ENCODE measurements at regions of chr7 and their contacts with region 1.

Region 1: GRCh38 chr7:105198223-105198622 is 184.2 kb downstream of the KMT2E start:
- DNase-seq: no peak
- ATAC-seq: peak in 7 of 8 donors; percentile 47 to 77 (median 56)
- H3K4me3 ChIP-seq: no peak overlapping the region
- H3K27ac ChIP-seq: no peak overlapping the region
- H3K4me1 ChIP-seq: peaks cover 0 to 38% (median 18%) of the 10 kb centered on the region in 9 donors
- H3K27me3 ChIP-seq: no peaks in the 10 kb centered on the region
- CTCF ChIP-seq: no peak

Region 2: DNA sequence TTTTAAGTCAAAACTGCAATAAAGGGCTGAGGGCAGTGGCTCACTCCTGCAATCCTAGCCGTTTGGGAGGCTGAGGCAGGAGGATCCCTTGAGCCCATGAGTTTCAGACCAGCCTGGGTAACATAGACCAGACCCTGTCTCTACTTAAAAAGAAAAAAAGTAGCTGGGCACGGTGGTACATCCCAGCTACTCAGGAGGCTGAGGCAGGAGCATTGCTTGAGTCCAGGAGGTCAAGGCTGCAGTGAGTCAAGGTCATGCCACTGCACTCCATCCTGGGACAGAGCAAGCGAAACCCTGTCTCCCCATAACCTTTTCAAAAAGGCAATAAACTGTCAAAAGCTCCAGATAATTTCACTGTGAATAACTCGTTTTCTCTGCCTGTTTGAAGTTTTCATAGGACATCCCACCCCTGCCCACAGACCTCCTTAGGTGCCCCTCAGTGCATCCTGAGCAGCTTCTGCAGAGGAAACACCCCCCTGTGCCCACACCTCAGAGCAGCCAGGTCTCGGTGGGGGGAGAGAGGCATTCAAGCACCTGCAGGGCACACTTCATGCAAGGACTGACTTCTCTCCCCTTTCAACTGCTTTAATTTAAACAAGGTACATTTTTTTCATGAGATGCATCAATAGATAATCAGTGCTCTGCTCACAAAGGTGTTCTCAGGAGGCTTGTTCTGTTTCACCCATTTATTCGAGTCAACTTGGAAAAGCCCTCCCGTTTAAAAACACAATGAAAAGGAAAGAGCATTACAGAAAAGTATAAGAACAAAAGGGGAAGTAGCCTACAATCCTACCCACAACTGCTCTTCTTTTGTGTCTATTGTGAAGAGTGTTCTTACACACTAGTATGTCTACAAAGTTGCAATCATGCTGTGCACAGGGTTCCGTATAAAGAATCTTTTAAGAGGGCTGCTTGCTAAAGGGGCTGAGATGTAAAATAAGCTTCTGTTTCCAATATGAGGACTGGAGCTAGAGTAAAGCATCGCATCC is 79.3 kb before region 1 on chr7:
- intact Hi-C with region 1: no loop called
- DNase-seq: no peak
- ATAC-seq: peak in 1 of 8 donors; percentile 57
- H3K4me3 ChIP-seq: no peak overlapping the region
- H3K27ac ChIP-seq: no peak overlapping the region
- H3K4me1 ChIP-seq: peaks cover 0 to under 1% (median 0%) of the 10 kb centered on the region in 9 donors
- H3K27me3 ChIP-seq: no peaks in the 10 kb centered on the region
- CTCF ChIP-seq: no peak

Region 3: GRCh38 chr7:105141068-105141467 is 57.2 kb before region 1 on chr7:
- intact Hi-C with region 1: no loop called
- DNase-seq: no peak
- ATAC-seq: peak in 2 of 8 donors; percentile 34 to 46
- H3K4me3 ChIP-seq: no peak overlapping the region
- H3K27ac ChIP-seq: no peak overlapping the region
- H3K4me1 ChIP-seq: peaks cover 0 to 14% (median 6%) of the 10 kb centered on the region in 9 donors
- H3K27me3 ChIP-seq: no peaks in the 10 kb centered on the region
- CTCF ChIP-seq: peak in 6 of 9 donors; percentile 15 to 45 (median 26)

Region 4: GRCh38 chr7:105238198-105238765 is 40.1 kb after region 1 on chr7:
- intact Hi-C with region 1: loop called in 1 of 10 experiments (anchors 5 kb)
- DNase-seq: no peak
- ATAC-seq: no peak
- H3K4me3 ChIP-seq: no peak overlapping the region
- H3K27ac ChIP-seq: no peak overlapping the region
- H3K4me1 ChIP-seq: peaks cover 2 to 48% (median 25%) of the 10 kb centered on the region in 9 donors
- H3K27me3 ChIP-seq: no peaks in the 10 kb centered on the region
- CTCF ChIP-seq: no peak

Region 5: DNA sequence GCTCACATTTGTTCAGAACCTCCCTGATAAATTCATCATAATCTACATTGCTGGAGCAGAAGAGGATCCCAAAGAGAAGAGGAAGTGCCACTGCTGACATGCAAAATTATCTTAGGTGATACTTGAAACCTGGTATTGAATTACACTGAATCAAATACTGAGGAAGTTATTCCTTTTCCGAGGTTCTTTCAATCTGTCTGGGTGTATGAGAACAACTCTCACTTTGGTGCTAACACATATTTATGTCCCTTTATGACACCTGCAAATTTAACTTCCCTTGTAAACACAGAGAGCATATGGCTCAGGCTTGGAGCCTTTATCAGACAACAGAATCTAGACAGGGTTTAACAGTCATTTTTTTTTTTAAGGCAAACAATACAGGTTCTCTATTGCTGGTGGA is 59.1 kb after region 1 on chr7:
- intact Hi-C with region 1: no loop called
- DNase-seq: no peak
- ATAC-seq: peak in 1 of 8 donors; percentile 16
- H3K4me3 ChIP-seq: no peak overlapping the region
- H3K27ac ChIP-seq: no peak overlapping the region
- H3K4me1 ChIP-seq: peaks cover 0 to 35% (median 21%) of the 10 kb centered on the region in 9 donors
- H3K27me3 ChIP-seq: no peaks in the 10 kb centered on the region
- CTCF ChIP-seq: no peak

Region 6: DNA sequence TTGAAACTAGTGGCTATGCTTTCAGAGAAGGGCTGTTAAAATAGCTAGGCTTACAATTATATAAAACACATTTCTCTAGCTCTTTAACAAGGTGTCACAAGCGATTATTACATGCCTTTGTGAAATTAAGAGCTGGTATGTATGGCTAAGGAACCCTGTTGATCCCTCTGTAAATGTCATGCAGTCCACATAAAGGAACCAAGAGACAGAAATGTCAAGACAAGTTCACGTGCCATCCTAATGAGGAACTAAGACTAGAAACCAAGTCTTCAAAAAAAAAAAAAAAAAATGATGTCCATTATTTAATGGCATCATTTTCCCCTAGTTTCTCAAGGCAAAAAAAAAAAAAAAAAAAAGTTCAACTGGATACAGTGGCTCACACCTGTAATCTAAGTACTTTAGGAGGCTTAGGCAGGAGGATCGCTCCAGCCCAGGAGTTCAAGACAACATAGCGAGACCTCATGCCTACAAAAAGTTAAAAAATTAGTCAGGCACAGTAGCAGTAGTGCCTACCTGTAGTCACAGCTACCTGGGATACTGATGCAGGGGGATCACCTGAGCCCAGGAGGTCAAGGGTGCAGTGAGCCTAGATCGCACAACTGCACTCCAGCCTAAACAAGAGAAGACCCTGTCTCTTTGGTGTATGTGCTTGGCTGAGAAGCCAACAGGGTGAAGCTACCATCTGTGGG is 127.1 kb after region 1 on chr7:
- intact Hi-C with region 1: loop called in 1 of 10 experiments (anchors 10 kb)
- DNase-seq: no peak
- ATAC-seq: no peak
- H3K4me3 ChIP-seq: no peak overlapping the region
- H3K27ac ChIP-seq: no peak overlapping the region
- H3K4me1 ChIP-seq: peaks cover 0 to 24% (median 0%) of the 10 kb centered on the region in 9 donors
- H3K27me3 ChIP-seq: no peaks in the 10 kb centered on the region
- CTCF ChIP-seq: no peak